ENCODE measurements at regions of chr6 and their contacts with region 1.

Region 1: DNA sequence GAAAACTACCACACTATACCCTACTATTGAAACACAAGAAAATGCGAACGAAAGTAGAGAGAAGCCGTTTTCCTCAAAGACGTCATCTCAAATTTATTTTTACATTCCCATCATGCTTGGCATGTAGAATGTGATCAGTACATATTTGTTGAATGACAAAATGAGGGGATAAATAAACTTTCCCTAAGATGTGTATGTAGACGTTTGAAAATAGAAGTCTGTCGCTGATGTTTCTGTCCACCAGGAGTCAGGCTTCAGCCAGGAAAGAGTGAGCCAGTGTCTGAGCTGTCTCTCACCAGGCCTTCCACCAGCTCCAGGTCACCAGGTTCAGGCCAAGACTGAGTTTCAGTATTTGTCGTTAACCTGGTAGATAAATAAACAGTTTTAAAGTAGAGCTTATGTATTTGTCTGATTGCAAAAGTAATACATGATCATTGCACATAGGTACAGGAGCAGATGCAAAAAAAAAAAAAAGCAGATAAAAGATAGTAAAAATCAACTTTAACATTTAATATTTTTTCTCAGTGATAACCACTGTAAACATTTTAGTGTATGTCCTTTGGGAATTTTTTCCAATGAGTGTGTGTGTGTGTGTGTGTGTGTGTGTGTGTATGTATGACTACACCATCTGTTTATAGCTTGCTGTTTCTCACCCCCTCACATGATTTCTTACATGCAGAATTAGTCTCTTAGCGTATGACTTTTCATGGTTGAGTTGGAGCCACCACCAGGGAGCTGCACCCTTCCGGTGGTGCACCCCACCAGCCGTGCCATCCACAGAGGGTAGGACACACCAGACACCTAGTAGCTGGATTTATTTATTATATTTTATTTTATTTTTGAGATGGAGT is 26.2 kb downstream of the WRNIP1 start:
- DNase-seq: peak in 2 of 3 donors; percentile 61 to 85
- ATAC-seq: peak; percentile 87
- H3K4me3 ChIP-seq: no peak overlapping the region
- H3K4me1 ChIP-seq: peaks cover 6% of the 10 kb centered on the region
- CTCF ChIP-seq: peak; percentile 31

Region 2: GRCh38 chr6:2820415-2820814 is 29.1 kb after region 1 on chr6:
- intact Hi-C with region 1: no loop called
- DNase-seq: no peak
- ATAC-seq: no peak
- H3K4me3 ChIP-seq: no peak overlapping the region
- H3K4me1 ChIP-seq: peaks cover 21% of the 10 kb centered on the region
- CTCF ChIP-seq: no peak

Region 3: DNA sequence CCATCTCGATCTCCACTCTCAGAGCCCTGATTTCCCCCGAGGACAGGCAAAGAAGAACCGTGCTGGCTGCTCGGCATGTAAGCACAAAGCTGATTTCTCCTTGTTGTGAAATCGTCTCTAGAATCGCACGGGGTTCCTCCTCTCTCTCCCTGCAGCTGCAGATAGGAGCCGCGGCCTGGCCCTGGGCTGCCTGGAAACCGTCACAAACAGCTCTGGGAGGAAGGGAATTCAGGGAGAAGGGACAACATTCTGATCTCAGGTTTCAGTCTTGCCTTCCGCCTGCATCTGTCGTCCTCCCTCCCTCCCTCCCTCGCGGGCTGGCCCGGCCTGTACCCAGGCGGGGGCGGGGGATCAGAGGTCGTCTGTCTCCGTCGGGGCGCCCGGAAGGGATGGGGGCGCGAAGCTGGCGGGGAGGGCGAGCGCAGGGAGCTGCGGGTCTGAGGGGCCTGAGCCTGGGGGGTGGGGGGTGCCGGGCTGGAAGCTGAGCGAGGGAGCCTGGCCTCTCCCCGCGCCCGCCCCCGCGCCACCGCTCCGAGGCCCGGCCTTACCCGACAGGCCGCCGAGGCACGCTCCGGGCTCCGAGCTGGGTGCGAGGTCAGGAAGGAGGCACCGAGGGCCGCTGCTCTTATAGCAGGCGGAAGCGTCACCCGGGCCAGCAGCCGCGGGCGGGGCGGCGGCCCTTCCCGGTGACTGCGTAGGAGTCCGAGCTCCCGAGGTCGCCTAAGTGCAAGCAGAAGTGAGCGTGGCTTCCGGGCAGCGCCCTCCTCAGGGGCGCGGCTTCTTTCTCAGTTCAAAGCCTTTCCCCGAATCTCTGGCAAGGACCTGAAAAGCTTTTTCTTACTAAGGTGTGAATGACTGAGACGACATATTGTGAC is 50.2 kb after region 1 on chr6 and contains the start of gene SERPINB1:
- intact Hi-C with region 1: loop called in 1 of 2 experiments (anchors 5 kb)
- DNase-seq: peak; percentile 95 to 98 (median 96)
- ATAC-seq: peak; percentile 88
- H3K4me3 ChIP-seq: peak within 1 kb of the TSS; percentile 42
- H3K4me1 ChIP-seq: peaks cover 29% of the 10 kb centered on the region
- CTCF ChIP-seq: no peak
- total RNA-seq, gene SERPINB1: 66.7 to 187 (median 132) TPM

Measured in mucosa of descending colon (tissue), 3 donors.